CD8-positive, alpha-beta T cell (primary cell): ENCODE measurements at regions of chrX and their contacts with region 1.

Region 1: GRCh38 chrX:149504915-149505651 is at the start of gene IDS:
- DNase-seq: peak; percentile 75 to 94 (median 87)
- ATAC-seq: peak; percentile 67
- H3K4me3 ChIP-seq: peak within 1 kb of the TSS; percentile 80 to 87
- H3K4me3 Mint-ChIP-seq: peak within 1 kb of the TSS; percentile 91
- H3K27ac ChIP-seq: peak within 1 kb of the TSS; percentile 98
- H3K27ac Mint-ChIP-seq: peak within 1 kb of the TSS; percentile 95
- H3K4me1 ChIP-seq: peaks cover 20% of the 10 kb centered on the region
- H3K4me1 Mint-ChIP-seq: peaks cover 34% of the 10 kb centered on the region
- H3K27me3 ChIP-seq: no peaks in the 10 kb centered on the region
- H3K27me3 Mint-ChIP-seq: no peaks in the 10 kb centered on the region
- CTCF ChIP-seq: no peak
- total RNA-seq, gene IDS: 230 to 240 TPM

Region 2: GRCh38 chrX:149205937-149206336 is 299.1 kb before region 1 on chrX:
- CTCF ChIA-PET with region 1: no interaction called
- POLR2A ChIA-PET with region 1: no interaction called
- intact Hi-C with region 1: no loop called
- DNase-seq: no peak
- ATAC-seq: no peak
- H3K4me3 ChIP-seq: no peak overlapping the region
- H3K4me3 Mint-ChIP-seq: no peak overlapping the region
- H3K27ac ChIP-seq: no peak overlapping the region
- H3K27ac Mint-ChIP-seq: no peak overlapping the region
- H3K4me1 ChIP-seq: no peaks in the 10 kb centered on the region
- H3K4me1 Mint-ChIP-seq: no peaks in the 10 kb centered on the region
- H3K27me3 ChIP-seq: no peaks in the 10 kb centered on the region
- H3K27me3 Mint-ChIP-seq: no peaks in the 10 kb centered on the region
- CTCF ChIP-seq: no peak

Region 3: GRCh38 chrX:149521438-149521837 is 16.4 kb after region 1 on chrX:
- CTCF ChIA-PET with region 1: interaction called, 3 read pairs
- POLR2A ChIA-PET with region 1: interaction called, 19 read pairs
- intact Hi-C with region 1: loop called (anchors 2 kb)
- DNase-seq: peak in 4 of 9 experiments; percentile 20 to 75 (median 58)
- ATAC-seq: peak; percentile 21
- H3K4me3 ChIP-seq: no peak overlapping the region
- H3K4me3 Mint-ChIP-seq: peak overlapping the region; percentile 71
- H3K27ac ChIP-seq: peak overlapping the region in 1 of 2 experiments; percentile 37
- H3K27ac Mint-ChIP-seq: peak overlapping the region; percentile 88
- H3K4me1 ChIP-seq: peaks cover 41% of the 10 kb centered on the region
- H3K4me1 Mint-ChIP-seq: peaks cover 48% of the 10 kb centered on the region
- H3K27me3 ChIP-seq: no peaks in the 10 kb centered on the region
- H3K27me3 Mint-ChIP-seq: no peaks in the 10 kb centered on the region
- CTCF ChIP-seq: no peak

Region 4: GRCh38 chrX:149527705-149528104 is 22.6 kb after region 1 on chrX:
- CTCF ChIA-PET with region 1: interaction called, 3 read pairs
- POLR2A ChIA-PET with region 1: interaction called, 19 read pairs
- intact Hi-C with region 1: loop called in 1 of 2 experiments (anchors 2 kb)
- DNase-seq: peak in 4 of 9 experiments; percentile 34 to 74 (median 51)
- ATAC-seq: peak; percentile 41
- H3K4me3 ChIP-seq: no peak overlapping the region
- H3K4me3 Mint-ChIP-seq: no peak overlapping the region
- H3K27ac ChIP-seq: peak overlapping the region in 1 of 2 experiments; percentile 37
- H3K27ac Mint-ChIP-seq: peak overlapping the region; percentile 74
- H3K4me1 ChIP-seq: peaks cover 22% of the 10 kb centered on the region
- H3K4me1 Mint-ChIP-seq: peaks cover 30% of the 10 kb centered on the region
- H3K27me3 ChIP-seq: no peaks in the 10 kb centered on the region
- H3K27me3 Mint-ChIP-seq: no peaks in the 10 kb centered on the region
- CTCF ChIP-seq: no peak

Region 5: DNA sequence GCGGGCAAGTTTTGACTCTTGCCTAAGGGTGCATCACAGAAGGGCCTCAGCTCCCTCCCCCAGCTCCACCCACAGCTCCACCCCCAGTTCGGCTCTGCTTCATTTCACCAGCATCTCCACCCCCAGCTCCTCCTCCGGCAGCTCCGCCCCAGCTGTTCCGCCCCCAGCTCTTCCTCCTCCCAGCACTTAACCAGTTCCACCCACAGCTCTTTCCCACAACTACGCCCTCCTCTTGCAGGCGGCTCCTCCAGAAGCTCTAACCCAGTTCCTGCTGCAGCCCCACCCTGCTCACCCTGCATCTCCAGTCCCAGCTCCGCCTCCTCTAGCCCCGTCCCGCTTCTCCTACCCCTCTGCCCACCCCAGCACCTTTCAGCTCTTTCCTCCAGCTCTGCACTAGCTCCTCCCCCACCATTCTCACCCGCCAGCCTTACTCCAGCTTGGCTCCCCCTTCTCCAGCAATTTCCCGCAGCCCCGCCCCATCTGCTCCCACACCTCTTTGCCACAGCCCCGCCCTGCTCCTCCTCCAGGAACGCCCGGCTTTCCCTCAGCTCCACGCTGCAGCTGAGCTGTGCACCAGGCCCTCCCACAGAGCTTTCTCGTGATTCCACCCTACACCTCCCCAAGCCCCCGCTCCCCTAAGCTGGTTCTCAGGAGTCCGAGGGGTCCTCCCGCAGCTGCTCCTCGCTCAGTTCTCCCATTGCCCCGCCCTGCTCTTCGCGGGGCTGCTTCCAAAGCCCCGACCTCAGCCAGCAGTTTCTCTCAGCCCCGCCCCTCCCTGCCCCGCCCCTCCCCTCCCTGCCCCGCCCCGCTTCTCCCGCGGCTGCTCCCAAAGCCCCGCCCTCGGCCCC is 34.4 kb after region 1 on chrX:
- CTCF ChIA-PET with region 1: interaction called, 4 read pairs
- POLR2A ChIA-PET with region 1: interaction called, 27 read pairs
- intact Hi-C with region 1: loop called (anchors 1 to 2 kb)
- DNase-seq: peak; percentile 74 to 96 (median 85)
- ATAC-seq: peak; percentile 54
- H3K4me3 ChIP-seq: peak overlapping the region; percentile 58 to 76
- H3K4me3 Mint-ChIP-seq: peak overlapping the region; percentile 85
- H3K27ac ChIP-seq: peak overlapping the region; percentile 61 to 71
- H3K27ac Mint-ChIP-seq: peak overlapping the region; percentile 81
- H3K4me1 ChIP-seq: peaks cover 7% of the 10 kb centered on the region
- H3K4me1 Mint-ChIP-seq: peaks cover 6% of the 10 kb centered on the region
- H3K27me3 ChIP-seq: no peaks in the 10 kb centered on the region
- H3K27me3 Mint-ChIP-seq: no peaks in the 10 kb centered on the region
- CTCF ChIP-seq: no peak

Region 6: DNA sequence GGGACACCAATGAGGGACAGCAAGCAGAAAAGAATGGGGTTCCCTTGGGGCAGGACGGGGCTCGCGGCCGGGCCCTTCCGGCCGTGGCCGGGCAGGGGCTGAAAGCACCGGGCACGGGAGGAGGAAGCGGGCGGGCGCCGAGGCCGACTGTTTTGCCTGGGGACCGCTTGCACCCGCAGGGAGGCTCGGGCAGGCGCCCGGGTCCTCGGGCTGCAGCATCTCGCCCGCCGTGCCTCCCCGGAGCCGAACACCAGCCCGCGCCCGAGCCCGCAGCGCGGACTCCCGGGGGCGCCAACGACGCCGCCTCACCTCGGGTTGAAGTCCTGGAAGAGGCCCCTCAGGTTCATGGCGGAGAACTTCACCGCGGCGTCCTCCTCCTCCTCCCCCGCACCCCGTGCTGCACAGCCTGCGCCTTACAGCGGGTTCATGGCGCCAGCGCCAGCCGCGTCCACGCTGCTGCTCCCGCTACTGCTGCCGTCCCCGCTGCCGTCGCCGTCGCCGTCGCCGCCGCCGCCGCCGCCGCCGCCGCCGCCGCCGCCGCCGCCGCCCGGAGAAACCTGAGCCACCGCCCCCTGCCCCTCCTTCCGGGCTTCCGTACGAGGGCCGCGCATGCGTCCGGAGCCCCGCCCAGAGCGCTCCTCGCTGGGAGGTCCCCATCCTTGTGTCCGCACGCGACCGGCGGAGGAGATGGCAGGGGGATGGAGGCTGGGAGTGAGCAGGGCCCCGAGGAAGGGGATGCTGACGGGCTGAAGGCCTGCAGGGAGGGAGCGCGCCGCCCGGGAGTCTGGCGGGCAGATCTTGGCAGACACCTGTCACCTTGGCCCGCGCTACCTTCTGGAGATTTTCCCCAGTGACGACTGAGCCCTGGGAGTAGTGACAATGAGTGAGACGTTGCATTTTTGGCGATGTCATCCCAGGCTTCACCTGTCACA is 126.4 kb after region 1 on chrX and contains the start of gene TMEM185A:
- CTCF ChIA-PET with region 1: no interaction called
- POLR2A ChIA-PET with region 1: no interaction called
- intact Hi-C with region 1: loop called (anchors 5 kb)
- DNase-seq: peak; percentile 45 to 86 (median 72)
- ATAC-seq: peak; percentile 89
- H3K4me3 ChIP-seq: peak within 1 kb of the TSS; percentile 55 to 67
- H3K4me3 Mint-ChIP-seq: peak within 1 kb of the TSS; percentile 91
- H3K27ac ChIP-seq: peak within 1 kb of the TSS in 1 of 2 experiments; percentile 53
- H3K27ac Mint-ChIP-seq: peak within 1 kb of the TSS; percentile 79
- H3K4me1 ChIP-seq: peaks cover 22% of the 10 kb centered on the region
- H3K4me1 Mint-ChIP-seq: peaks cover 41% of the 10 kb centered on the region
- H3K27me3 ChIP-seq: no peaks in the 10 kb centered on the region
- H3K27me3 Mint-ChIP-seq: peaks cover 4% of the 10 kb centered on the region
- CTCF ChIP-seq: no peak
- total RNA-seq, gene TMEM185A: 6.9 to 11.3 TPM

Region 7: GRCh38 chrX:149825424-149825823 is 320.3 kb after region 1 on chrX:
- CTCF ChIA-PET with region 1: no interaction called
- POLR2A ChIA-PET with region 1: no interaction called
- intact Hi-C with region 1: loop called in 1 of 2 experiments (anchors 10 kb)
- DNase-seq: peak in 7 of 9 experiments; percentile 13 to 65 (median 45)
- ATAC-seq: no peak
- H3K4me3 ChIP-seq: no peak overlapping the region
- H3K4me3 Mint-ChIP-seq: no peak overlapping the region
- H3K27ac ChIP-seq: no peak overlapping the region
- H3K27ac Mint-ChIP-seq: no peak overlapping the region
- H3K4me1 ChIP-seq: peaks cover 12% of the 10 kb centered on the region
- H3K4me1 Mint-ChIP-seq: peaks cover 12% of the 10 kb centered on the region
- H3K27me3 ChIP-seq: no peaks in the 10 kb centered on the region
- H3K27me3 Mint-ChIP-seq: peaks cover 5% of the 10 kb centered on the region
- CTCF ChIP-seq: peak; percentile 35